Panc1 (cell line): ENCODE measurements at regions of chr12 and their contacts with region 1.

Region 1: DNA sequence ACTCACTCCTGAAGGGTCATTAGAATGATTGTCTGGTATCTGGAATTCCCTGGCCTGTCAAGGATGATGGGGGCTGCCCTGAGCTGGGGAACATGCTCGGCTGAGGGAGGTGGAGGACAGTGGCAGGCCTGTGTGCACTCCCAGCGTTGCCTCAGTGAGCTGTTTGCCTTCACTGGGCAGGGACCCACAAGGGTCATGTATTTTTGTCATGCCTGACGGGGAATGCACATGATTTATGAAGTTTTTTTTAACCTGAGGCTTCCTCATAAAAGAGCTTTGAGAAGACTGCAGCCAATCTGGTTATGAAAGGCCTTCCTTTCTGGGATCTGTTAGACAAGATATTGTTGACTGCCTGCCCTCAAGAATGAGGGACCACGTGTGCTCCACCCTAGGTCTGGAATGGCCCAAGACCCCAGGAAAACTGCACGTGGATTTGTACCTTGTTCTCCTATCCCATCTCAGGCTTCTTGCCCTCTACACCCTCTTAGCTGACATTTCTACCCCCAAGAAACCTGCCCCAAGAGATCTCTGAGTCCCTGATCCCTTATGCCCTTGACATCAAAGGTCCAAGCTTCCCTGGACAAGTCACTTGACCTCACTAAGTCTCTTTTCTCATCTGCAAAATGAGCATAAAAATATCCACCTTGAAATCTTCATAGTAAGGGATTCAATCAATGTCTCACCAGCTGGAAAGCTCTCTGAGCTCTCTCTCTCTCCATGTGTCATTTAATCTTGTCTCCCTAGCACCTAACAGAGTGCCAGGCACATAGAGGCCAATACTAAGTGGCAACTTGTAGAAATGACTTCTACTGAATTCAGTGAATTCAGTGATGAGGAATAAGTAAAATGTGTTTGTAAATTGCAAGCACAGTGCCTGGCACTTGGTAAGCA is 24.5 kb upstream of the COL2A1 start:
- DNase-seq: no peak
- ATAC-seq: no peak
- H3K4me3 ChIP-seq: no peak overlapping the region
- H3K27ac ChIP-seq: no peak overlapping the region
- H3K4me1 ChIP-seq: peaks cover 16% of the 10 kb centered on the region
- H3K27me3 ChIP-seq: no peaks in the 10 kb centered on the region
- CTCF ChIP-seq: no peak

Region 2: GRCh38 chr12:48001505-48002413 is 27.0 kb before region 1 on chr12:
- CTCF ChIA-PET with region 1: no interaction called
- POLR2A ChIA-PET with region 1: interaction called, 10 read pairs
- in situ Hi-C with region 1: no loop called
- intact Hi-C with region 1: no loop called
- DNase-seq: no peak
- ATAC-seq: peak; percentile 88
- H3K4me3 ChIP-seq: peak overlapping the region; percentile 54 to 78
- H3K27ac ChIP-seq: no peak overlapping the region
- H3K4me1 ChIP-seq: peaks cover 22% of the 10 kb centered on the region
- H3K27me3 ChIP-seq: peaks cover 40% of the 10 kb centered on the region
- CTCF ChIP-seq: no peak